PC-9 (cell line): ENCODE measurements at regions of chr1 and their contacts with region 1.

Region 1: GRCh38 chr1:10308001-10308400 is 90.9 kb upstream of the PGD start:
- DNase-seq: no peak
- H3K4me3 ChIP-seq: no peak overlapping the region
- H3K27ac ChIP-seq: no peak overlapping the region
- H3K4me1 ChIP-seq: no peaks in the 10 kb centered on the region
- H3K27me3 ChIP-seq: no peaks in the 10 kb centered on the region
- CTCF ChIP-seq: no peak

Region 2: DNA sequence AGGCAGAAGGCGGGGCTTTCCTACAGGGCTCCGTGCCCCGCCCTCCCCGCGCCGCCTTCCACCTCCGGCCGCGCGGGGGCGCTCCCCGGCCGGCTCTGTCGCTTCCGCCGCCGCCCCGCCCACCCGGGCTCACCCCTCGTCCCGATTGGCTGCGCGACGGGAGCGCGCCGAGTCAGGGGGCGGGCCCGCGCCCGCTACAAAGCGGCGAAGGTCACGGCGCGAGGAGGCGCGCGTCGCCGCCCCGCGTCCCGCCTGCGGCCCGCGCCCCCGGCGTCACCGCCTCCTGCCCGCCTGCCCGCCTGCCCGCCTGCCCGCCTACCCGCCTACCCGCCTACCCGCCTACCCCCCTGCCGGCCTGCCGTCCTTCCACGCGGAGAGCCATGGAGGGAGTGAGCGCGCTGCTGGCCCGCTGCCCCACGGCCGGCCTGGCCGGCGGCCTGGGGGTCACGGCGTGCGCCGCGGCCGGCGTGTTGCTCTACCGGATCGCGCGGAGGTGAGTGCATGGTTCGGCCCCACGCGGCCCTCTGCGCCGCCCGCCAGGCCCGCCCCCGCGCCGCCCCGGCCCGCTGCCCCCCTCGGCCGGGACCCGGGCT is 719.4 kb before region 1 on chr1 and contains the start of gene TMEM201:
- CTCF ChIA-PET with region 1: interaction called, 14 read pairs
- POLR2A ChIA-PET with region 1: no interaction called
- intact Hi-C with region 1: no loop called
- DNase-seq: peak; percentile 62 to 93
- H3K4me3 ChIP-seq: peak within 1 kb of the TSS; percentile 78
- H3K27ac ChIP-seq: no peak within 1 kb of the TSS
- H3K4me1 ChIP-seq: no peaks in the 10 kb centered on the region
- H3K27me3 ChIP-seq: no peaks in the 10 kb centered on the region
- CTCF ChIP-seq: no peak
- total RNA-seq, gene TMEM201: 17.2 and 17.4 TPM in 2 replicates

Region 3: GRCh38 chr1:9985001-9985400 is 323.0 kb before region 1 on chr1:
- CTCF ChIA-PET with region 1: no interaction called
- POLR2A ChIA-PET with region 1: no interaction called
- intact Hi-C with region 1: no loop called
- DNase-seq: no peak
- H3K4me3 ChIP-seq: no peak overlapping the region
- H3K27ac ChIP-seq: no peak overlapping the region
- H3K4me1 ChIP-seq: no peaks in the 10 kb centered on the region
- H3K27me3 ChIP-seq: no peaks in the 10 kb centered on the region
- CTCF ChIP-seq: no peak

Region 4: DNA sequence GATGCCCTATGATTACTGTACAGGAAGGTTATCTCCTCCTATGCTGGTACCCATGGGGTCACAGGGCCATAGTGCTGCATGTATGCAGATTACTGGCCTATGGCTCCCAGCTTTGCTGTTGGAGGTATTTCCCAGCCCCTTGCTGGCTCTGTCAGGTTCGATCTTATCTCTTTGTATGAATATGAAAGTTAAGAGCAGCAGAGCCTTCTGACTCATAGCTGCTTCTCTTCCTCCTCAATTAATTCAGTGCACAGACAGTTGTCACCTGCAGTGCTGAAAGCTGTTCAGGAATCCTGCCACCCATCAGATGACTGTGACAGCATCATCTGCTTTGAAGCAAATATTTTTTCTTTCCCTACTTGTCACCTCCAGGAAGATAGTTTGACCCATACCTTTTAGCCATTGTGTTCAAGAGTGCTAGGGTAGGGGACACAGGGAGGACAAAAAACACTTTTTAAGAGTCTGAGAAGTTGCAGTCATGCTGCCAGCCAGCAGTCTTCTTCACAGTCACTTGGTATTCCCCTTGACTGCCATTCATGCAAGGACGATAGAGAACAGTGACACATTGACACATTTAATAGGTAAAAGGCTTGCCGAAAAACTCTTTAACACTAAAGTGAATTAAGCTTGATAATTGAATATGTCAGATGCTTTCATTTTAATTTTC is 24.6 kb before region 1 on chr1:
- CTCF ChIA-PET with region 1: no interaction called
- POLR2A ChIA-PET with region 1: interaction called, 19 read pairs
- intact Hi-C with region 1: no loop called
- DNase-seq: peak; percentile 48 to 50
- H3K4me3 ChIP-seq: no peak overlapping the region
- H3K27ac ChIP-seq: no peak overlapping the region
- H3K4me1 ChIP-seq: no peaks in the 10 kb centered on the region
- H3K27me3 ChIP-seq: no peaks in the 10 kb centered on the region
- CTCF ChIP-seq: no peak